Psoas muscle (tissue), 8 donors: ENCODE measurements at regions of chr5 and their contacts with region 1.

Region 1: GRCh38 chr5:74673011-74673790 is 11.8 kb upstream of the HEXB start:
- DNase-seq: no peak
- ATAC-seq: peak; percentile 74 to 93 (median 74)
- H3K4me3 ChIP-seq: peak overlapping the region; percentile 63
- H3K27ac ChIP-seq: no peak overlapping the region
- H3K4me1 ChIP-seq: no peaks in the 10 kb centered on the region
- H3K27me3 ChIP-seq: no peaks in the 10 kb centered on the region
- CTCF ChIP-seq: peak; percentile 55

Region 2: DNA sequence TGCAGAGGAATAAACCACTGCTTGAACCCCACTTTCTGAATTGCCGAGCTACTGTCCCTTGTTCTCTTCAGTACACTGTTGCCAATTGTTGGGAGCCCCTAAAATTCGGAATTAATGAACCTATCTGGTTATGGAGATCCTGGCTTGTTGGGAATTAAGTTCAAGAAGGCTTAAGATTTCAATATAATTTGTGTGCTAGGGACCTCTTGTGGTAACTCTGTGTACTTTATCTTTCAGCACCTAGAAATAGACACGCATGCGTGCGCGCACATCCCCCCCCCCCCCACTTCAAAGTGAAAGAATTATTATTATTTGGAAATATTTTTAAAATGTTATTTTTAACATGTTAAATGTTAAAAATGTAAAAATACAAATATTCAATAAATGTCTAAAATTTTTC is 246.3 kb after region 1 on chr5:
- intact Hi-C with region 1: loop called (anchors 5 kb)
- DNase-seq: no peak
- ATAC-seq: no peak
- H3K4me3 ChIP-seq: no peak overlapping the region
- H3K27ac ChIP-seq: no peak overlapping the region
- H3K4me1 ChIP-seq: no peaks in the 10 kb centered on the region
- H3K27me3 ChIP-seq: no peaks in the 10 kb centered on the region
- CTCF ChIP-seq: peak; percentile 39

Region 3: GRCh38 chr5:75265731-75266130 is 592.5 kb after region 1 on chr5:
- intact Hi-C with region 1: loop called in 1 of 2 experiments (anchors 10 kb)
- DNase-seq: no peak
- ATAC-seq: no peak
- H3K4me3 ChIP-seq: no peak overlapping the region
- H3K27ac ChIP-seq: no peak overlapping the region
- H3K4me1 ChIP-seq: no peaks in the 10 kb centered on the region
- H3K27me3 ChIP-seq: no peaks in the 10 kb centered on the region
- CTCF ChIP-seq: peak; percentile 37